AG04449 (cell line): ENCODE measurements at regions of chr2 and their contacts with region 1.

Region 1: GRCh38 chr2:74250189-74250631 is 51.8 kb downstream of the MTHFD2 start:
- DNase-seq: no peak
- H3K4me3 ChIP-seq: no peak overlapping the region
- CTCF ChIP-seq: peak; percentile 67

Region 2: DNA sequence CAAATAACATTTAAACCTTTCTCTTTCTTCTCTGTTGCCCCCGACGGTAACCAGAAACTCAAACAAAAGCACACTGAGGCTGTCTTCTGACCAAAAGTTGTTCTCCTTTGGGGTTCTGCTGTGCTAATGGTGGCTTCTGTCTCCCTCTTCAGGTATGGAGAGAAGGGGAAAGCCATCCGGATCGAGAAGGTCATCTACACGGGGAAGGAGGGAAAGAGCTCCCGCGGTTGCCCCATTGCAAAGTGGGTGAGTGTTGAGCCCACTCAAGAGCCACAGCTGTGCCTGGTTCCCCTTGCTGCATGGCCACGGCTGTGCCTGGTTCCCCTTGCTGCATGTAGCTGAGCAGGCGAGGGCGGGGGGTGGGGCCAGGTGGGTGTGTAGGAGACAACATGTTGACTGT is 169.9 kb before region 1 on chr2:
- CTCF ChIA-PET with region 1: no interaction called
- POLR2A ChIA-PET with region 1: no interaction called
- DNase-seq: no peak
- H3K4me3 ChIP-seq: no peak overlapping the region
- CTCF ChIP-seq: no peak

Region 3: DNA sequence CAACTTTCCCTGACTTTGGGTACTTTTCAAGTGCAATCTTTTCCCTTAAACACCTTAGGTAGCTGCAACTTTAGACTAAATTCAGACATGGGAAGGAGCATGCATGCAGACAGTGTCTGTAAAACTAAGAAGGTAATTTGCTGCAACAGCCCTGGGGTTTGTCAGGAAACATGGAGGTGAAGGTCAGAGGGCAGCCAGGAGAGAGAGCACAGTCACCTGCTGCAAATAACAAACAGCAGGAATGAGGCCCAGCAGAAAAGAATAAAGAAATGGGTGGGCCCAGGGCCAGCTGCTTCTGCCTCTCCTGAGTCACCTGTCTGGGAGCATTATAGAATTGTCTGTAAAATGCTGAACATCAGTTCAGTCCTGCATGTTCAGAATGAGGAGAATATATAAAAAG is 16.6 kb before region 1 on chr2:
- CTCF ChIA-PET with region 1: interaction called, 64 read pairs
- POLR2A ChIA-PET with region 1: no interaction called
- DNase-seq: no peak
- H3K4me3 ChIP-seq: no peak overlapping the region
- CTCF ChIP-seq: no peak

Region 4: DNA sequence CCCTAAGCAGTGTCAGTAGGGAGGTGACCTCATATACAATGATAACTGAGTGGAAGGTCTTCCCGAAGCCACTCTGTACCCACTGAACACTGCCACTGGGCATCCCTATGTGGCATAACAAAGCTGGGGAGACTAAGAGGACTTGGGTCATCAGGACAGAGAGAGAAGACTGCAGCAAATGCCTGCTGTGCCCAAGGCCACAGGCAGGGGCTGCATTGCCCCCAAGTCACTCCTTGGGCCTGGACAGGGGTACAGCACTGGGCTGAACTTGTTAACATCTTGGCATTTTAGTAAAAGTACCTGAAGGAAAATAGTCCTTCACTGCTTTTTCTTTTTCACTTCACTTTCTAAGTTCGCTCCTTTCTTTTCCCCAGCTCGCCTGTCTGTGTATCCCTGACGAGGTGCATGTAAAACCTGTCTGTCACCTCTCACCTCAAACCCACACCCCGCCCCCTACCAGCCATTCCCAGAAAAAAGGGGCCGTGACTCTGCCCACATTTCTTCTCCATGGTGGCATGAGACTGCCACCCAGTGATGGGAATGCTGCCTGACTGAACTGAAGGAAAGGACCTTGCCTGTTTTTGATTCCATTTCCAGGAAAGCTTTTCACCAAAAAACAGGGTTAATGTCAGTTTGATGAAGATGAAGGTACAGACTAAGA is 11.1 kb after region 1 on chr2:
- CTCF ChIA-PET with region 1: interaction called, 55 read pairs
- POLR2A ChIA-PET with region 1: no interaction called
- DNase-seq: no peak
- H3K4me3 ChIP-seq: no peak overlapping the region
- CTCF ChIP-seq: peak; percentile 57

Region 5: DNA sequence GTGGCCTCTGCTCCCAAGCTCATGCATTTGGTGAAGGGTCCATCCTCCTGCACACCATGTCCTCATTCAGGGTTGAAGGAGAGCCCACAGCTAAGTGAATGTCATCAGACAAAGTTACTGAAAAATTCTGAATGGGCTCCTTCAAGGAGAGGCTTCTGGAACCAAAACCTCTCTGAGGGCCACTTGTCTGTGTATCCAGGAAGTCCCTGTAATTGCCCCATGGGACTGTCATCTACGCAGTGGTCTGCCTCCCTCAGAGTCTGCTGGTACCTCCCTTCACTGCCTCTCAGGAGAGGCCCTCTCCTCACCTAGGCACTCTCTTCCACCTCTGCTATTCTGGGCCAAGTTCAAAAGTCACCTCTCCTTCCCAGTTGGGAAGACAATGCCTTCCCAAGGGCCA is 25.0 kb after region 1 on chr2:
- CTCF ChIA-PET with region 1: interaction called, 22 read pairs
- POLR2A ChIA-PET with region 1: no interaction called
- DNase-seq: no peak
- H3K4me3 ChIP-seq: no peak overlapping the region
- CTCF ChIP-seq: no peak